ENCODE measurements at regions of chr11 and their contacts with region 1.

Region 1: DNA sequence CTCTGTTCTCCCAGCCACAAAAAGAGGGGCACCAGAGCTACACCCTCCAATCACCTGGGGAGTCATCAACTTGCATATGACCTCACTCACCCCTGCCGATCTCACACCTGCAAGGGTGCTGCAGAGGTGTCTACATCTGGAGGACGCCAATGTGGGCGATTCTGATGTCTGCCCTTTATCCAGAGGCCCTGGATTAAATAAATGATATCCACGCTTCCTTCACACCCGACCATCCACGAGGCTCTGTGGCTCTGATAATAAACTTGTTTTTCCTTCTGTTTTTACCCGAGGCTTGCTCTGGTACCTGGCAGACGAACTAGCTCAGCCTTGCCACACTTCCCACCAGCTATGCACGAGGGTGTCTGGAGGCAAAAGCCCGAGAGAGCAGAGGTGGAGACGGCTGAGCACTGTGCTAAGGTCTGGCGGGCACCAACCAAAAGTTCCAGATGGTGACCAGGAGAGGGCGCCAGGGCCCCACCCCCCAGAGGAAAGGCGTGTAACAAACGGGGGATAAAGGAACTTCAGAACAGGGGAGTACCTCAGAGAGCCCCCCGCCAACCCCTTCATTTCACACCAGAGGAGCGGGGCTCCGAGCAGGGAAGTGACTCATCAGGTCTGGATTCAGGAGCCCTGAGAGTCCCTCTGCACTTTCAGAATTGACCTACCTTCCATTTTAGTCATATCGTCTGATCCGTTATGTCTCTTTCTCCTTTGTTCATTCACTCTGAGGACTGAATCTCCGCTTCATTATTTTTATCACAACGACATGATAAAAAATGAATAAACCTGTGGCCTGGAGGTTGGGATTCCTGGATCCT is 13.5 kb downstream of the SCN3B start:
- DNase-seq: peak; percentile 82
- H3K4me3 Mint-ChIP-seq: no peak overlapping the region
- H3K27ac Mint-ChIP-seq: no peak overlapping the region
- H3K4me1 Mint-ChIP-seq: peaks cover 2% of the 10 kb centered on the region
- H3K27me3 Mint-ChIP-seq: peaks cover 4% of the 10 kb centered on the region

Region 2: DNA sequence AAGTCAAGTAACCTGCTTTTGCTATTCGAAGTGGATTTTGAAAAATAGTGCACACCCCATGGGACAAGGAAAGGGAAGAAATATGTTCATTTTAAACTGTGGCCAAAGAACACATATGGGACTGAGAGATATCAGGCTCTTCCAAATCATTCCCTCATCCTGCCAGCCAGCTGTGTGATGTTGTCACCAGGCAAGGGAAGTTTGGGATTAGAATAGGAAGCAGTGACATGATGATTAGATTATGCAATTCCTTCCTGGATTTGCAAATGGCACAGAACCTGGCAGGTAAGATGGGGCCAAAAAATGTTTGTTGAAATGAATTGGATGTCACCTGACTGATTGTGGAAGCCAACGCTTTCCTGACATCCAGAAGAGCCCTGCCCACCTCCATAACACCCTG is 18.4 kb after region 1 on chr11:
- intact Hi-C with region 1: no loop called
- DNase-seq: no peak
- H3K4me3 Mint-ChIP-seq: no peak overlapping the region
- H3K27ac Mint-ChIP-seq: no peak overlapping the region
- H3K4me1 Mint-ChIP-seq: peaks cover 5% of the 10 kb centered on the region
- H3K27me3 Mint-ChIP-seq: peaks cover 23% of the 10 kb centered on the region

Region 3: GRCh38 chr11:123707606-123708205 is 66.8 kb after region 1 on chr11:
- intact Hi-C with region 1: loop called (anchors 1 kb)
- DNase-seq: peak; percentile 89
- H3K4me3 Mint-ChIP-seq: no peak overlapping the region
- H3K27ac Mint-ChIP-seq: no peak overlapping the region
- H3K4me1 Mint-ChIP-seq: peaks cover 2% of the 10 kb centered on the region
- H3K27me3 Mint-ChIP-seq: peaks cover 10% of the 10 kb centered on the region